ENCODE measurements at regions of chr2 and their contacts with region 1.

Region 1: DNA sequence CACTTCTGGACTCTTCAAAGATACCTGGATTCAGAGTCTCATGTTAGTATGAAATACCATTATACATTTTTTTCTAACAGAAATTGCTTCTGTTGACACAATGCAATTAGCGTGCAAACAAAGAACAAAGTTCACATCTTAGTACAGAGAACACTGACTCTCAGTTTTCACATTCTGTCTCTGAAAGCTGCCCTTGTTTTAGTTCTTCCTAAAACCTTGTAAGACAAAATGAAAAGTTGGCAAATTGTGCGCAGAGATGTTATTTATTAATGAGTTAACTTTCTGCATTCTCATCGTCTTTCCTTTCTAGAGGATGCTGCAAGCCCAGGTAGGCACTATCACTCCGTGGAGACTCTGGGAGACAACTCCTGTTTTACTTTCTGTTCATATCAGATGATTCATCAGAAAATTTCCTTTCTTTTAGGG is 377.3 kb upstream of the POU3F3 start:
- DNase-seq: no peak
- H3K4me3 ChIP-seq: no peak overlapping the region
- H3K27ac ChIP-seq: no peak overlapping the region
- H3K4me1 ChIP-seq: no peaks in the 10 kb centered on the region
- H3K27me3 ChIP-seq: no peaks in the 10 kb centered on the region
- CTCF ChIP-seq: no peak

Region 2: GRCh38 chr2:104332743-104333142 is 143.8 kb before region 1 on chr2:
- CTCF ChIA-PET with region 1: no interaction called
- dilution Hi-C with region 1: no loop called
- in situ Hi-C with region 1: no loop called
- intact Hi-C with region 1: no loop called
- DNase-seq: no peak
- H3K4me3 ChIP-seq: no peak overlapping the region
- H3K27ac ChIP-seq: no peak overlapping the region
- H3K4me1 ChIP-seq: no peaks in the 10 kb centered on the region
- H3K27me3 ChIP-seq: no peaks in the 10 kb centered on the region
- CTCF ChIP-seq: no peak

Region 3: DNA sequence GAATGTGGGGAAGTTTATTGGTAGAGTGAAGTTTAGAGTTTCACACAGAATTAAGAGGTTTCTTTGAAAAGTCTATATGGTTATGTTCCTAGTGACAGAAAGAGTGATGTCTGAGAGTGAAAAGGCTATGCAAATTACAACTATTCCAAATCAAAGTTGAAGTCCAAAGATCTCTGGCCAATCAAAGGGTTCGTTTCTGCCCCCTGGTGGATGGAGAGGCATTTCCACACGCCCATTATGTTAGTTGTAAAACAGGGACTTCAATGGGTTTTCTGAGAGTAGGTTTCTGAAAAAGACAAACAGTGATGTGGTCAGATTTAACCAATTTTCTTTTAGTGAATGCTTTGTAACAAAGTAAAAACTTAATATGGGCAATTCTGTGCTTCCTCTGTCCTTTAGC is 64.2 kb before region 1 on chr2:
- CTCF ChIA-PET with region 1: no interaction called
- dilution Hi-C with region 1: no loop called
- in situ Hi-C with region 1: no loop called
- intact Hi-C with region 1: no loop called
- DNase-seq: no peak
- H3K4me3 ChIP-seq: no peak overlapping the region
- H3K27ac ChIP-seq: no peak overlapping the region
- H3K4me1 ChIP-seq: no peaks in the 10 kb centered on the region
- H3K27me3 ChIP-seq: no peaks in the 10 kb centered on the region
- CTCF ChIP-seq: peak; percentile 17 to 23

Region 4: GRCh38 chr2:104444392-104444791 is 32.2 kb before region 1 on chr2:
- CTCF ChIA-PET with region 1: no interaction called
- dilution Hi-C with region 1: loop called (anchors 5 kb)
- in situ Hi-C with region 1: no loop called
- intact Hi-C with region 1: no loop called
- DNase-seq: no peak
- H3K4me3 ChIP-seq: no peak overlapping the region
- H3K27ac ChIP-seq: no peak overlapping the region
- H3K4me1 ChIP-seq: no peaks in the 10 kb centered on the region
- H3K27me3 ChIP-seq: no peaks in the 10 kb centered on the region
- CTCF ChIP-seq: no peak